Prostate gland (tissue), 2 donors: ENCODE measurements at regions of chr5 and their contacts with region 1.

Region 1: DNA sequence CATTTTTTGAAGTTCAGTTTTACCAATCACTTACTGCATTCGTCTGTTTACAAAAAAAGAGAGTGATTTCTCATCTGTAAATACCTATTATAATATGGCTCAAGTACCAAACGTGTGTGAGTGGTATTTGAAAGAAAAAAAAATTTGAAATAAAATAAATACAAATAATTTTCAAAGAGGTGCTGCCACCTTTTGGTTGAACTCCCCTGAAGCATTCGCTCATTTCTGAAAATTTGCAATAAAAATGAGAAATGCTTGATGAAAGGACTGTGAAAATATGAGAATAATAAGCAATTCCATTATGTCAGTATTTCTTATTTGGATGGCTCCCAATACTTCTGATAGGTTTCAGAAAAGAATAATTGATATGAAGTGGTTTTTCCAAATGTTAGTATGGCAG is 409.9 kb downstream of the CTNND2 start:
- DNase-seq: no peak
- H3K4me3 ChIP-seq: no peak overlapping the region
- H3K27ac ChIP-seq: no peak overlapping the region
- H3K4me1 ChIP-seq: no peaks in the 10 kb centered on the region
- H3K27me3 ChIP-seq: no peaks in the 10 kb centered on the region
- CTCF ChIP-seq: peak in 3 of 4 experiments; percentile 19 to 37 (median 24)
- POLR2A ChIP-seq: no peak

Region 2: GRCh38 chr5:10563945-10564837 is 930.1 kb before region 1 on chr5 and contains the start of gene ANKRD33B:
- intact Hi-C with region 1: no loop called
- DNase-seq: no peak
- H3K4me3 ChIP-seq: peak within 1 kb of the TSS; percentile 54 to 63
- H3K27ac ChIP-seq: peak within 1 kb of the TSS; percentile 46 to 70
- H3K4me1 ChIP-seq: no peaks in the 10 kb centered on the region
- H3K27me3 ChIP-seq: no peaks in the 10 kb centered on the region
- CTCF ChIP-seq: no peak
- POLR2A ChIP-seq: no peak
- total RNA-seq, gene ANKRD33B: 4.1 to 7.4 TPM

Region 3: DNA sequence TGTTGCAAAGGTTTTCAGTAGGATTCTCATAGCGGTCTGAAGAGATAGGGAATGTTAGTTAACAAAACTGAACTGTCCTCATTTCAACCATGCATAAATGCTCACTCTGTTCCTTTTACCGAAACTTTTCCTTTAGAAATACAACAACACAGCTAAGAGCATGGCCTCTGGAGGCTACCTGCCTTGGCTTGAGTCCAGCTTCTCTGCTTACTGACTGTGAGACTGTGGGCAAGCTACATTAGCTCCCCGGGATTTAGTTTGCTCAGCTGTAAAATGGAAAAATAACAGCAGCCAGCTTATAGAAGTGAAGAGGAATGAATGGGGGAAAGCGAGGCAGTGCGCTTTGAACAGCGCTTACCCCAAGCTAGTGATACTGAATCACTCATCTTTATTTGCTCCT is 225.4 kb before region 1 on chr5:
- intact Hi-C with region 1: loop called (anchors 10 kb)
- DNase-seq: no peak
- H3K4me3 ChIP-seq: no peak overlapping the region
- H3K27ac ChIP-seq: no peak overlapping the region
- H3K4me1 ChIP-seq: no peaks in the 10 kb centered on the region
- H3K27me3 ChIP-seq: no peaks in the 10 kb centered on the region
- CTCF ChIP-seq: no peak
- POLR2A ChIP-seq: no peak